Endothelial cell of umbilical vein (primary cell): ENCODE measurements at regions of chr12 and their contacts with region 1.

Region 1: DNA sequence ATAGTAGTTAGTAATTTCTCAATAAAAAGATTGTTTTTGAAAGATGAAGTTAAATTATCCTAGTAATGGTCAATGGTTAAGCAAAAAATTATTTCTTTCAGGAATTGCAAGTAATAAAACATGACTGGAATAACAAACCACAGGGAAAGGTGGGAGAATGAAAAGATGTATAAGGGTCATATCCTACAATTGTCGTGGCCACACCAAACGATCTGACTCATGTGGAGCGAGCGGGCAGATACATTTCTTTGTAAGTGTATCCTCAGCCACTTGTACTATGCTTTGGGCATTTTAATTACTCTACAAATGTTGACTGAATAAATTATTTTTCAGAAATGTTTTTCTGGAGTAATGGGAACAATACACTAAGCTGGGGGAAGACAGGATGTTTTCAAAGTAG is 45.5 kb downstream of the ACSM4 start:
- DNase-seq: peak; percentile 91
- H3K4me3 ChIP-seq: no peak overlapping the region
- H3K27ac ChIP-seq: peak overlapping the region; percentile 48
- H3K4me1 ChIP-seq: peaks cover 37% of the 10 kb centered on the region
- H3K27me3 ChIP-seq: no peaks in the 10 kb centered on the region
- CTCF ChIP-seq: no peak
- POLR2A ChIP-seq: no peak

Region 2: DNA sequence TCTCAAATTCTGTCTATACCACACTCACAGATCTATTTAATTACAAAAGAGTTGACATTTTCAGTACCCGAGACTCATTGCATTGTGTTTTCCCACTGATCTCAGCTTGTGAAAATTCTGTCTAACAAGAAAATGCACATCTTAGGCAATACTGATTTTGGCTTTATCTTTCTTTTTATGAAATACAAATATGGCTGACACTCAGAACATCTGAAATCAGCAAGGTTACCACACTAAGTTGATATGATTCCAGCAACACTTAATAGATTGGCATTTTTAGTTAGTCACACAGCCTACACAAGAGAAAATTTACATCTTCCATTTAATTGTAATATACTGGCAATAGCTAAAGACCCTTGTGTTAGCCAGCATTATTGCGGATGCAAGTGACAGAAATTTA is 119.7 kb before region 1 on chr12:
- CTCF ChIA-PET with region 1: no interaction called
- POLR2A ChIA-PET with region 1: no interaction called
- dilution Hi-C with region 1: no loop called
- intact Hi-C with region 1: no loop called
- DNase-seq: no peak
- H3K4me3 ChIP-seq: no peak overlapping the region
- H3K27ac ChIP-seq: no peak overlapping the region
- H3K4me1 ChIP-seq: no peaks in the 10 kb centered on the region
- H3K27me3 ChIP-seq: peaks cover 2 to 3% of the 10 kb centered on the region in 2 experiments
- CTCF ChIP-seq: no peak
- POLR2A ChIP-seq: no peak

Region 3: GRCh38 chr12:7433276-7433822 is 83.9 kb after region 1 on chr12:
- CTCF ChIA-PET with region 1: no interaction called
- POLR2A ChIA-PET with region 1: no interaction called
- dilution Hi-C with region 1: no loop called
- intact Hi-C with region 1: loop called (anchors 2 kb)
- DNase-seq: peak; percentile 91
- H3K4me3 ChIP-seq: peak overlapping the region in 1 of 3 experiments; percentile 12
- H3K27ac ChIP-seq: peak overlapping the region; percentile 93
- H3K4me1 ChIP-seq: peaks cover 41% of the 10 kb centered on the region
- H3K27me3 ChIP-seq: no peaks in the 10 kb centered on the region
- CTCF ChIP-seq: no peak
- POLR2A ChIP-seq: no peak

Region 4: DNA sequence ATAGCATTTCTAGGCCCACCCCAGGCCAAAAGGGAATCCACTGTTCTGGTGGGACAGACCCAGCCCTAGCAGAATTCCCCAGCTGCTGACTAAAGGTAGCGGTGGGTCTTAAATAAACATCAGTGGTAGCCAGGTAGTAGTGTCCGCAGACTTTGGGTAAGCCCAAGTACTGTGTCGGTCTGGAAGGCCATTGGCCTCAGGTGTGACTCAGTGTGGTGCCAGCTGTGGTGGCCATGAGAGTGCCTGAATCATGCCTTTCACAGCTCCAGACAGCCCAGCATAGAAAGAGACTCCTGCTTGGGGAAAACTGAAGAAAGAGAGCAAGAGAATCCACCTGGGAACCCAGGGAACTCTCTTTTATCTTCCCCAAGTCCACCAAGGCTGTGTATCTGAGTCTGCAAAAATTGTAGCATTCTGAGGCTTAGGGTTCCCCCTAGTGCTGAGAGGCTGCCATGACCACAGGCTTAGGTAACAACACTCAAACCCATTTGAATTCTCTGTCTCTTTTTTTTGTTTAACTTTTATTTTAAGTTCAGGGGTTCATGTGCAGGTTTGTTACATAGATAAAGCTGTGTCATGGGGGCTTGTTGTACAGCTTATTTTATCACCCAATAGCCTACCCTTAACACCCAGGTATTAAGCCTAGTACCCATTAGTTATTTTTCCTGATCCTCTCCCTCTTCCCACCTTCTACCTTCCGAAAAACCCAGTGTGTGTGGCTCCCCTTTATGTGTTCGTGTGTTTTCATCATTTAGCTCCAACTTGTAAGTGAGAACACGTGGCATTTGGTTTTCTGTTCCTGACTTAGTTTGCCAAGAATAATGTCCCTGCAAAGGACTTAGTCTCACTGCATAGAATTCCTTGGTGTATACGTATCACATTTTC is 111.2 kb after region 1 on chr12:
- CTCF ChIA-PET with region 1: no interaction called
- POLR2A ChIA-PET with region 1: no interaction called
- dilution Hi-C with region 1: no loop called
- intact Hi-C with region 1: no loop called
- DNase-seq: peak; percentile 73
- H3K4me3 ChIP-seq: no peak overlapping the region
- H3K27ac ChIP-seq: no peak overlapping the region
- H3K4me1 ChIP-seq: no peaks in the 10 kb centered on the region
- H3K27me3 ChIP-seq: peaks cover 2 to 4% of the 10 kb centered on the region in 2 experiments
- CTCF ChIP-seq: peak; percentile 83 to 86
- POLR2A ChIP-seq: no peak